ENCODE measurements at regions of chr11 and their contacts with region 1.

Region 1: DNA sequence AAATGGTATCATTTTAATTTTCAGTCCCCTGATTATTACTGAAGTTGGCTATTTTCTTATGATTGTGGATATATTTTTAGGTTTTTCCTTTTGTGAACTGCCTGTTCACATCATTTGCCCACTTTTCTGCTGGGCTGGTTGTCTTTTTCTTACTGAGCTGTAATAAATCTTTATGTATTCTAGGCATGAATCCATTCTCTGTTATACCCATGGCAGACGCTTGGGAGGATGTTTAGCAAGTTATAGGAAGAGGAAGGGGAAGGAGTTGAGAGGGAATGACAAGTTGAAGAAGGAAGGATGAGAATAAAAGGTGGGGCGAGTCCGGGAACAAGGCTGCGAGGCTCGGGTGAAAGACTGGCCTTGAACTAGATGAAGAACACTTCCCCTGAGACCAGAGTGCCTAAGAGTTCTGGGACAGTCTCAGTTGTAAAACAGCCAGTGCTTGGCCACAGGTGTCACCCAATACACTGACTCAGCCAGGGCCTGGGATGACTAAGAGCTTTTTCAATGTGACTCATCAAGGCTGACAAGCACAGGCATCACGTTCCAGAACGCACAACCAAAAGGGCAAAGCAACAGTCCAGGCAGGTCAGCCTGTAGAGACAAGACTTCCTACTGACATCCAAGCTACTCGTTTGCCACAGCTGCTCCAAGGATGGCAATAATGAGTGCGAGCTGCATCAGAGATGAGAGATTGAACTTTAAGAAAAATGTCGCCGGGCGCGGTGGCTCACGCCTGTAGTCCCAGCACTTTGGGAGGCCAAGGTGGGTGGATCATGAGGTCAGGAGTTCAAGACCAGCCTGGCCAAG is 35.2 kb downstream of the LRFN4 start:
- DNase-seq: peak; percentile 85 to 95 (median 88)
- ATAC-seq: peak; percentile 99
- H3K4me3 ChIP-seq: no peak overlapping the region
- H3K27ac ChIP-seq: peak overlapping the region; percentile 82
- H3K4me1 ChIP-seq: peaks cover 16 to 35% of the 10 kb centered on the region in 2 experiments; a peak in 4 of 5 replicates
- H3K27me3 ChIP-seq: no peaks in the 10 kb centered on the region
- CTCF ChIP-seq: peak; percentile 32 to 47 (median 46); a peak in 5 of 6 replicates
- EP300 ChIP-seq: peak; percentile 66
- POLR2A ChIP-seq: peak; percentile 37; the same call in 1 of the 2 replicates
- RAD21 ChIP-seq: peak; percentile 29 to 52; a peak in 3 of 4 replicates

Region 2: GRCh38 chr11:65646921-65647751 is 1244.9 kb before region 1 on chr11:
- CTCF ChIA-PET with region 1: no interaction called
- POLR2A ChIA-PET with region 1: no interaction called
- in situ Hi-C with region 1: no loop called
- intact Hi-C with region 1: no loop called
- DNase-seq: peak in 2 of 4 experiments; percentile 35 to 42
- ATAC-seq: no peak
- H3K4me3 ChIP-seq: no peak overlapping the region
- H3K27ac ChIP-seq: no peak overlapping the region
- H3K4me1 ChIP-seq: peaks cover 21 to 69% of the 10 kb centered on the region in 2 experiments
- H3K27me3 ChIP-seq: no peaks in the 10 kb centered on the region
- CTCF ChIP-seq: no peak
- EP300 ChIP-seq: no peak
- POLR2A ChIP-seq: no peak
- RAD21 ChIP-seq: no peak

Region 3: DNA sequence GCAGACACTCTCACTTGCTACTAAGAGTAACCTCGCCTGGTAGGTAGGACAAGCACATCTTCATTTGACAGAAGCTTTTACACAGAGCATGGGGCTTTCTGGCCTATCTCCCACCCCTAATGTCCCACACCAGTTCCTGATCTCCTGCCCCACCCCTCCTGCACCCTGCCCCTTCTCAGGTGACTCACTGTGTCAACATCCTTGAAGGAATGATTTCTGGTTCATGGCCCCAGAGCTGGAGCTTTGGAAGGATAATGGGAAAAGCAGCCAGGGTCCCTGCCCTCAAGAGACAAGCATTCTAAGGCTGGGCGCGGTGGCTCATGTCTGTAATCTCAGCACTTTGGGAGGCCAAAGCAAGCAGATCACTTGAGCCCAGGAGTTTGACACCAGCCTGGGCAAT is 12.0 kb after region 1 on chr11:
- CTCF ChIA-PET with region 1: no interaction called
- POLR2A ChIA-PET with region 1: interaction called, 11 read pairs
- in situ Hi-C with region 1: no loop called
- intact Hi-C with region 1: no loop called
- DNase-seq: peak in 2 of 4 experiments; percentile 43 to 50
- ATAC-seq: peak; percentile 34; the same call in 1 of the 3 replicates
- H3K4me3 ChIP-seq: no peak overlapping the region
- H3K27ac ChIP-seq: no peak overlapping the region
- H3K4me1 ChIP-seq: peaks cover 16 to 24% of the 10 kb centered on the region in 2 experiments
- H3K27me3 ChIP-seq: no peaks in the 10 kb centered on the region
- CTCF ChIP-seq: no peak
- EP300 ChIP-seq: no peak
- POLR2A ChIP-seq: no peak
- RAD21 ChIP-seq: no peak

Region 4: GRCh38 chr11:66958232-66958955 is 66.3 kb after region 1 on chr11 and contains the start of gene PC:
- CTCF ChIA-PET with region 1: no interaction called
- POLR2A ChIA-PET with region 1: interaction called, 4 read pairs
- in situ Hi-C with region 1: no loop called
- intact Hi-C with region 1: loop called (anchors 5 kb)
- DNase-seq: peak; percentile 98 to 100 (median 98)
- ATAC-seq: peak; percentile 98
- H3K4me3 ChIP-seq: peak within 1 kb of the TSS; percentile 81
- H3K27ac ChIP-seq: peak within 1 kb of the TSS; percentile 71
- H3K4me1 ChIP-seq: peaks cover 9 to 19% of the 10 kb centered on the region in 2 experiments
- H3K27me3 ChIP-seq: no peaks in the 10 kb centered on the region
- CTCF ChIP-seq: no peak
- EP300 ChIP-seq: 0 out of 2 replicates have a peak, but pooled peaks have one; percentile 27
- POLR2A ChIP-seq: peak; percentile 78
- RAD21 ChIP-seq: 0 out of 4 replicates have a peak, but pooled peaks of 1 of the 2 experiments have one; percentile 4
- polyA plus RNA-seq, gene PC: 0.94 to 0.97 TPM

Region 5: DNA sequence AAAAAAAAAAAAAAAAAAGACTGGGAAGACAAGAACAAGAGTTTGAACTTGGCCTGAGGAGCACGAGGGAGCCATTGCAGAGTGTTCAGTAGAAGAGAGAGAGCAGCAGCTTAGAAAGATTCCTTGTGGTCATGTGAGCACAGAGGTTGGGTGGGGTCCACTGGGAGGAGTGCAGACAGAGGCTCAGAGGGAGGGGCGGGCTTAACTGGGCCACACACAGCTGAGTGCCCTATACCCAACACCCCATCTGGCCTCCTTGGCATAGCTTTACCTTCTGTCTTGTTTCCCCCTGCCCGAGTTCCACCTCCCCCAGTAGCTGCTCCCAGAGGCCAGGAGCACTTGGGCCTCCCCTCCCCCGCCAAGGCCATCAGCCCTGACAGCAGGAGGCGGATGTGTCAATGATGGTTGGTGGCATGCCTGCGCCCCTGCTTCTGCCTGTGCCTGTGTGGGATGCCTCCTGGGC is 95.1 kb after region 1 on chr11:
- CTCF ChIA-PET with region 1: no interaction called
- POLR2A ChIA-PET with region 1: no interaction called
- in situ Hi-C with region 1: no loop called
- intact Hi-C with region 1: no loop called
- DNase-seq: peak in 3 of 4 experiments; percentile 34 to 52 (median 44)
- ATAC-seq: peak; percentile 70
- H3K4me3 ChIP-seq: no peak overlapping the region
- H3K27ac ChIP-seq: no peak overlapping the region
- H3K4me1 ChIP-seq: peaks cover 2 to 9% of the 10 kb centered on the region in 2 experiments; a peak in 4 of 5 replicates
- H3K27me3 ChIP-seq: peaks cover 0 to 4% of the 10 kb centered on the region in 2 experiments; a peak in 1 of 5 replicates
- CTCF ChIP-seq: no peak
- EP300 ChIP-seq: no peak
- POLR2A ChIP-seq: no peak
- RAD21 ChIP-seq: no peak

Measured in K562 (cell line).